Endothelial cell of umbilical vein (primary cell): ENCODE measurements at regions of chr9 and their contacts with region 1.

Region 1: DNA sequence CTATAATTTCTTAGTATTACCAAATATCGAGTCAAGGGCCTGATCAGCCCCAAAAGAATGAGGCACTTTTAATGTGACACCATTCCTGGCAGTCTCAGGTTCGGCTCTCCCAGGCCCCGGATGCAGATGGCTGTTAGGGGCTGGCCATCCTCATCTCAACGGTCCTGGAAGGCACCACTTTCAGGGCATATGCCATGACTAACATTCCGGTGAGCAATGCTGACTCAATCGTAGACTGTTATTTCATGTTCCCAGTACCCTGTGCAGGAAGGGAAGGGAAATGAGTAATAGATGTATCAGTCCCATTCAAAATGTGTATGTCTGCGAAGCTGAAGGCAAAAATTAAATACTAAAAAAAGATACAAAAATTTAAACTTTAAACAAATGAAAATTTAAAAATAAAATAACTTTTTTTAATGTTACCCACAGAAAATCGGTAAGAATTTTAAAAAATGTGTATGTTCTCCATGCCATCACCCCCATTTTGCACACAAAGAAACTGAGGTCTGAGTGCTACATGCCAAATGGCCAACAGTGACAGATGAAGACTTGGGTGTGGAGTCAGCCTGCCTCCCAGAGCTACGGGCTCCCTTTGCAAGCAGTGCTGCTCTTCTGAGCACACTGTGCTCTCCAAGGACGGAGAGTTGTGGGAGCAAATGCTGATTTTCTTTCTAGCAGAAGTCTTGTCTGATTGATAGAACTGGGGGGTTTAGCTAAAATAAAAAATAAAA is 79.0 kb downstream of the GLDC start:
- DNase-seq: peak; percentile 98
- H3K4me3 ChIP-seq: peak overlapping the region in 1 of 3 experiments; percentile 12
- H3K27ac ChIP-seq: peak overlapping the region; percentile 99
- H3K4me1 ChIP-seq: peaks cover 58% of the 10 kb centered on the region
- H3K27me3 ChIP-seq: no peaks in the 10 kb centered on the region
- CTCF ChIP-seq: peak in 1 of 2 donors; percentile 12
- POLR2A ChIP-seq: peak; percentile 82

Region 2: DNA sequence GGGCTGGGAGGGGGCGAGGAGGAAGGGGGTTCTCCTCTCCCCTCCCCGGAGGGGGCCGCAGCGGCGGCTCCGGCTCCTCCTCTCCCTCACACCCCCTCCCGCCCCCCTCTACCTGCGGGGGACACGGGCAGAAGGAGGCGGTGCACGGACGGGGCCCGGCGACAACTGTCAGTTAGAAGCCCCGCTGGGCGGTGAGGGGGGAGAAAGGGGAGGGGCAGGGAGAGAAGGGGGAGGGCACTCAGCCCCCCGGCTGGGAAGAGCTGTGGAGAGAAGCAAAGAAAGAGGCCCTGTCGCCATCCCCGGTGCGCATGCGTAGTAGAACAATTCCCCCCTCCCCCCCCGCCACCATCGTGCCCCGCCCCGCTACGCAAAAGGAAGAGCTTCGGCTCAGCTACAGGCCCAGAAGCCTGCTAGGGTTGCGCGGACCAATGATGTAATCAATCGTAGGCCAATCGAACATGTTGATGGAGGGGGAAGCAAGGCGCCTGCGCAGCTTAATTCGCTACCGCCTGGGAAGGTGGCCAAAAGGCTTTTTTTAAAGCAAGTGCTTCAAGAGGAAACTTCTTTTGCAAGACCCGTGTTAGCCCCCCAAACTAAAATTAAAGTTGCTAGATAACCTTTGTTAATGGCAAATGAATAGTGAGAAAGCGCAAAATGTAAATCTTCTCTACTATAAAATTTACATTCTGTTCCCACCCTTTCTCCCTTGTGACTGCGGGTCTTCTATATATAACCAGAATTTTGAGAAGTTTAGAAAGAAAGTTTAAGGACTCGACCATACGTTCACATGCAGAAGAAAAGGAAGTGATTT is 558.2 kb before region 1 on chr9:
- CTCF ChIA-PET with region 1: no interaction called
- POLR2A ChIA-PET with region 1: interaction called, 4 read pairs
- dilution Hi-C with region 1: no loop called
- intact Hi-C with region 1: loop called (anchors 10 kb)
- DNase-seq: peak; percentile 98
- H3K4me3 ChIP-seq: peak overlapping the region; percentile 65 to 98 (median 89)
- H3K27ac ChIP-seq: peak overlapping the region; percentile 60
- H3K4me1 ChIP-seq: peaks cover 22% of the 10 kb centered on the region
- H3K27me3 ChIP-seq: no peaks in the 10 kb centered on the region
- CTCF ChIP-seq: no peak
- POLR2A ChIP-seq: peak; percentile 50

Region 3: GRCh38 chr9:6230037-6230760 is 336.4 kb before region 1 on chr9:
- CTCF ChIA-PET with region 1: no interaction called
- POLR2A ChIA-PET with region 1: no interaction called
- dilution Hi-C with region 1: no loop called
- intact Hi-C with region 1: loop called (anchors 2 kb)
- DNase-seq: peak; percentile 82
- H3K4me3 ChIP-seq: no peak overlapping the region
- H3K27ac ChIP-seq: peak overlapping the region; percentile 31
- H3K4me1 ChIP-seq: peaks cover 33% of the 10 kb centered on the region
- H3K27me3 ChIP-seq: no peaks in the 10 kb centered on the region
- CTCF ChIP-seq: no peak
- POLR2A ChIP-seq: no peak

Region 4: GRCh38 chr9:6330958-6331634 is 235.5 kb before region 1 on chr9:
- CTCF ChIA-PET with region 1: no interaction called
- POLR2A ChIA-PET with region 1: no interaction called
- dilution Hi-C with region 1: no loop called
- intact Hi-C with region 1: loop called (anchors 1 kb)
- DNase-seq: peak; percentile 88
- H3K4me3 ChIP-seq: no peak overlapping the region
- H3K27ac ChIP-seq: peak overlapping the region; percentile 69
- H3K4me1 ChIP-seq: peaks cover 19% of the 10 kb centered on the region
- H3K27me3 ChIP-seq: no peaks in the 10 kb centered on the region
- CTCF ChIP-seq: no peak
- POLR2A ChIP-seq: no peak

Region 5: DNA sequence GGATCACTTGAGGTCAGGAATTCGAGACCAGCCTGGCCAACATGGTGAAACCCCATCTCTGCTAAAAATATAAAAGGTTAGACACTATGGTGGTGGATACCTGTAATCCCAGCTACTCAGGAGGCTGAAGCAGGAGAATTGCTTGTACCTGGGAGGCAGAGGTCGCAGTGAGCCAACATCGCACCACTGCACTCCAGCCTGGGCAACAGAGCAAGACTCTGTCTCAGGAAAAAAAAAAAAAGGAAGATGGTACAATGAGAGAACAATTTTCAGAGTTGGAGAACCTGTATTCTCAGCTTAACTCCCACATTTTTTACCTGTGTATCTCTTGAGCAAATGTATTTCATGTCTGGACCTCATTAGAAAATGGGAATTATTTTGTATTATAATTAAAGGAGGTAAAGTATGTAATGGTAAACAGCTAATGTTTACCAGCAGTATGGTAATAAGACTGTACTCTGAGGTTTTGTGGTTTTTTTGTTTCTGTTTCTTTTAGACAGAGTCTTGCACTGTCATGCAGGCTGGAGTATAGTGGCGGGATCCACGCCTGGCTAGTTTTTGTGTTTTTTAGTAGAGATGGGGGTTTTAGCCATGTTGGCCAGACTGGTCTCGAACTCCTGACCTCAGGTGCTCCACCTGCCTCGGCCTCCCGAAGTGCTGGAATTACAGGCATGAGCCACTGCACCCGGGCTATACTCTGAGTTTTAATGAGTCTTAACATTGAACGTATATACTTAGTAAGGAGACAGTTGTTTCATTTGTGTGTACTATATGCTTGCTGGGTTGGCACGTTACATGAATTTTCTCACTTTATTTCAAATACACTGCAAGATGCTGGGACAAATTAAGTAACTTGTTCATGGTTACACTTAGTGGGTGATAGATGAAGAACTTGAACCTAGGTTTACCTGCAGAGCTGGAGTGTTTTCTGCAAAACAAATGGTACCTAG is 137.4 kb before region 1 on chr9:
- CTCF ChIA-PET with region 1: interaction called, 4 read pairs
- POLR2A ChIA-PET with region 1: no interaction called
- dilution Hi-C with region 1: no loop called
- intact Hi-C with region 1: loop called (anchors 5 kb)
- DNase-seq: no peak
- H3K4me3 ChIP-seq: no peak overlapping the region
- H3K27ac ChIP-seq: no peak overlapping the region
- H3K4me1 ChIP-seq: peaks cover 37% of the 10 kb centered on the region
- H3K27me3 ChIP-seq: no peaks in the 10 kb centered on the region
- CTCF ChIP-seq: no peak
- POLR2A ChIP-seq: no peak

Region 6: DNA sequence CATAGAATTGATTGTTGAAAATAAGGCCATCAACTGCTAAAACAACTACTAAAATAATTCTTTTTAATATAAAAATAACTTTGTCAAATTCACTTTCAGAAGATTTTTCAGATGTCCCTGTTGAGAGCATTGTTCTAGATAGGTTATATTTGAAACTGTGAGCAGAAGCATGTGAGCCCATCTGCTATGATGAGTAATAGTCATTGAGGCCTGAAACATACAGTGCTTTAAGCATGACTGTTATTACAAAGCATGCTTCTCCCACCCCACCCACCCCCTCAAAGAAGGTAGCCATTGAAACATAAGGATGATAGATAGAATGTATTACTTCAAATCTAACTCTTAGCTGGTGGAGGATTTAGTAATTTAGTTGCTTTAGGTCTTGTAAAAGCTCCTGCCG is 67.6 kb before region 1 on chr9:
- CTCF ChIA-PET with region 1: interaction called, 48 read pairs
- POLR2A ChIA-PET with region 1: no interaction called
- dilution Hi-C with region 1: no loop called
- intact Hi-C with region 1: loop called (anchors 2 kb)
- DNase-seq: no peak
- H3K4me3 ChIP-seq: no peak overlapping the region
- H3K27ac ChIP-seq: no peak overlapping the region
- H3K4me1 ChIP-seq: peaks cover 3% of the 10 kb centered on the region
- H3K27me3 ChIP-seq: no peaks in the 10 kb centered on the region
- CTCF ChIP-seq: no peak
- POLR2A ChIP-seq: no peak

Region 7: GRCh38 chr9:6552033-6552432 is 14.5 kb before region 1 on chr9:
- CTCF ChIA-PET with region 1: interaction called, 46 read pairs
- POLR2A ChIA-PET with region 1: interaction called, 9 read pairs
- dilution Hi-C with region 1: no loop called
- intact Hi-C with region 1: loop called (anchors 1 kb)
- DNase-seq: peak; percentile 92
- H3K4me3 ChIP-seq: peak overlapping the region in 1 of 3 experiments; percentile 58
- H3K27ac ChIP-seq: peak overlapping the region; percentile 99
- H3K4me1 ChIP-seq: peaks cover 42% of the 10 kb centered on the region
- H3K27me3 ChIP-seq: no peaks in the 10 kb centered on the region
- CTCF ChIP-seq: peak in 1 of 2 donors; percentile 45
- POLR2A ChIP-seq: peak; percentile 19